ENCODE measurements at regions of chr3 and their contacts with region 1.

Region 1: DNA sequence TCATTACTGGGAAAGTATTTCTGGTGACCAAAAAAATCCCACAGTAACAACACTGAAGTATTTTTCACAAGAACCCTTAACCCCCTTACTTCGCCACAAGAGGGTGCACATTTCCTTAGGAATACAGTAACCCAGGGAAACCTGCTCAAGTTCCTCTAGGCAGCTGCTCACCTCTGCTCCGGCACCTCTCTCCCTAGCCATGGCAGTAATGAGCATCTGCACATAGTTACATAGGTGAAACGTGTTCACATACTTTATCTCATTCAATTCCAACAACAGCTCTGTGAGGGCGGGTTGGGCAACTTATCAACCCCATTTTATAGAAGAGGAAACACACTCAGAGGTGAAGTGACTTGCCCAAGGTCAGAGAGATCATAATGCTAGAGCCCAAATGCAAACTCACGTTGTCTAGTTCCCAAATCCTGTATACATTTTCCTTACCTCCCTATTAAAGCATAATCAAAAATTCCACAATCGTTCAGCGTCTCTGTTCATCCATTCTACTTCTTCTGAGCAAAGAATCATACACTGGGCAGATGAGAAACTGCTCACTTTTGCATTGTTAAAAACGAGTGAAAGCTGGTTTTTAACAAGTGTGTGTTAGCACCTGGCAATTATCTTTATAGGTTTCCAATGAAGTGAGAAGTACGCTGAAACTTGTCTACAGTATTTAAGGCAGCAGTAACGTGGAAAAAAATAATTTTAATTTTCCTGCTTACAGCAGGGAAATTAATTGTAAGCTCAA is 90.7 kb downstream of the IGF2BP2 start:
- DNase-seq: peak; percentile 81
- ATAC-seq: peak; percentile 90
- H3K4me3 ChIP-seq: peak overlapping the region in 1 of 2 experiments; percentile 1; a peak in 1 of 4 replicates
- H3K27ac ChIP-seq: peak overlapping the region; percentile 62
- H3K4me1 ChIP-seq: peaks cover 75% of the 10 kb centered on the region
- H3K27me3 ChIP-seq: no peaks in the 10 kb centered on the region
- CTCF ChIP-seq: peak; percentile 88

Region 2: GRCh38 chr3:185677146-185677829 is 56.9 kb before region 1 on chr3:
- CTCF ChIA-PET with region 1: interaction called, 3 read pairs
- POLR2A ChIA-PET with region 1: no interaction called
- in situ Hi-C with region 1: no loop called
- intact Hi-C with region 1: loop called (anchors 5 kb)
- DNase-seq: peak; percentile 69
- ATAC-seq: peak; percentile 94
- H3K4me3 ChIP-seq: no peak overlapping the region
- H3K27ac ChIP-seq: no peak overlapping the region
- H3K4me1 ChIP-seq: no peaks in the 10 kb centered on the region
- H3K27me3 ChIP-seq: no peaks in the 10 kb centered on the region
- CTCF ChIP-seq: peak; percentile 85

Region 3: DNA sequence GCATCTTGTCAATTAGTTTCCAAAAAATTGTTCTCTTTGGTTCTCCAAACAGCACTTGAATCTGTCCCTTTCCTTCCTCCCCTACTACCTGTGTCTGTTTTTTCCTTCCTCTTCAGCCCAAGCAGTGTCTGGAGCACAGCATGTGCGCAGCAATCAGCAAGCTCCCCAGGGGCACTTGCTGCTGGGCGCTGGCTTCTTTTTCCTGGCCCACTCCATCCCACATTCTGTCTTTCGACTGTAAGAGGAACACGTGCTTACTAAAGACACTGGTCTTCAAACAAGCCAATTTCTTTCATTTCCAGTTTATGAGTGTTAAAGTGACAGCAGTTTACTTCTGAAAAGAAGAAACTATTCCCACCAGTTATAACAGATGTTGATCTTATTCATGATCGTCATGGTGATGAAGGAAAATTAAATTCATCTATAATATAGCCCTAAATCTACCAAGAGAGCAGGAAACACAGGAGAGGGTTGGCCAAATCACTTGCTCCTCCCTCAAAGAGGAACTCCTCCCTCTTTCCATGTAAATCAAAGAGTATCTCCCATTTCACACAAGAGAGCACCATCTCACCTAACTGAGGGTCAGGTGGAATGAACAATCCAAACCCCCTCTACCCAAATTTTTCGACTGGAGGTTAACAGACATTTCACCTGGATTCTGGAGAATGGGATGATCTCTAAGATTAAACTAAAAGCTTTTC is 24.8 kb before region 1 on chr3:
- CTCF ChIA-PET with region 1: no interaction called
- POLR2A ChIA-PET with region 1: interaction called, 13 read pairs
- in situ Hi-C with region 1: no loop called
- intact Hi-C with region 1: no loop called
- DNase-seq: no peak
- ATAC-seq: 0 out of 2 replicates have a peak, but pooled peaks have one; percentile 54
- H3K4me3 ChIP-seq: no peak overlapping the region
- H3K27ac ChIP-seq: no peak overlapping the region
- H3K4me1 ChIP-seq: peaks cover 23% of the 10 kb centered on the region
- H3K27me3 ChIP-seq: no peaks in the 10 kb centered on the region
- CTCF ChIP-seq: no peak

Region 4: DNA sequence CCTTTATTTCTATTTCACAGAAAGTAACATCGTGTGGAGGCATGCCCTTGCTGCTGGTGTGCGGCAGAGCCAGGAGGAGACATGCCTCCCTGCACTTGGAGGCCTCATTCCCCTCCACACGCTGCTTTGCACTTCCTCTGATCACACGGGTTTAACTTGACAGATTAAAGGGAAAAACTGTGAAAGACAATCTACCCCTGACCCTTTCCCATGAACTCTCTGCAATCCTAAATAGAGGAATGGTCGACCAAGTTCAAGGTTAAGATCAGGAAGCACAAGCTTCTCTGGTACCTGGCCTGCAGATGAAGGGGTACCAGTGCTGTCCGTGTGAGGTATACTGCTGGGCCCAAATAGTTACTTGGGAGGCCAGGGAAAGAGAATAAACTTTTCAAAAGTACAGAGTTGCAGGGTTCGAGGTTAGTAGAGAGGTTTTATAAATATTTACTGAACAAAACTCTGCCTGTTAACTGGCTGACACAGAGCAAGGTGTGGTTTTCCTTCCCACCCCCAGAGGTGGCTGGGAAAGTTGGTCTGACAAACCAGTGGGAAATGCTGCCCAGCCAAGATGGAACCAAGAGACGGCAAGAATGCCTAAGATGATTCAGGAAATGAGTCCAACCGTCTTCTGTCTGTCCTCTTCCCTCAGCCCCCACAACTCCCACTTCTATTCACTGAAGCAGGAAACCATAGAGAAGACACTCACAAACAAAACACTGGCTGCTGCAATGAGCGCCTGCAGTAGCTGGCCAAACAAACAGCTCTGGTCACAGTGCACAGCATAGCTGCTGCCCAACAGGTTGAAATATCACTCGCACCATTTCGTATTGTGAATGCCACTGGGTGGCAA is 11.1 kb after region 1 on chr3:
- CTCF ChIA-PET with region 1: interaction called, 18 read pairs
- POLR2A ChIA-PET with region 1: no interaction called
- in situ Hi-C with region 1: no loop called
- intact Hi-C with region 1: no loop called
- DNase-seq: no peak
- ATAC-seq: peak; percentile 86
- H3K4me3 ChIP-seq: peak overlapping the region in 1 of 2 experiments; percentile 10; a peak in 2 of 4 replicates
- H3K27ac ChIP-seq: peak overlapping the region; percentile 49
- H3K4me1 ChIP-seq: peaks cover 37% of the 10 kb centered on the region
- H3K27me3 ChIP-seq: no peaks in the 10 kb centered on the region
- CTCF ChIP-seq: no peak

Region 5: GRCh38 chr3:185764163-185764979 is 30.2 kb after region 1 on chr3:
- CTCF ChIA-PET with region 1: interaction called, 20 read pairs
- POLR2A ChIA-PET with region 1: no interaction called
- in situ Hi-C with region 1: no loop called
- intact Hi-C with region 1: no loop called
- DNase-seq: no peak
- ATAC-seq: 0 out of 2 replicates have a peak, but pooled peaks have one; percentile 52
- H3K4me3 ChIP-seq: no peak overlapping the region
- H3K27ac ChIP-seq: peak overlapping the region; percentile 20; the same call in 1 of the 2 replicates
- H3K4me1 ChIP-seq: peaks cover 50% of the 10 kb centered on the region
- H3K27me3 ChIP-seq: no peaks in the 10 kb centered on the region
- CTCF ChIP-seq: no peak

Region 6: GRCh38 chr3:185813691-185814215 is 79.6 kb after region 1 on chr3:
- CTCF ChIA-PET with region 1: no interaction called
- POLR2A ChIA-PET with region 1: no interaction called
- in situ Hi-C with region 1: no loop called
- intact Hi-C with region 1: loop called (anchors 5 kb)
- DNase-seq: no peak
- ATAC-seq: peak; percentile 88
- H3K4me3 ChIP-seq: peak overlapping the region in 1 of 2 experiments; percentile 2; a peak in 1 of 4 replicates
- H3K27ac ChIP-seq: peak overlapping the region; percentile 86
- H3K4me1 ChIP-seq: peaks cover 81% of the 10 kb centered on the region
- H3K27me3 ChIP-seq: no peaks in the 10 kb centered on the region
- CTCF ChIP-seq: no peak